Heart right ventricle (tissue), 16 donors: ENCODE measurements at regions of chr3 and their contacts with region 1.

Region 1: DNA sequence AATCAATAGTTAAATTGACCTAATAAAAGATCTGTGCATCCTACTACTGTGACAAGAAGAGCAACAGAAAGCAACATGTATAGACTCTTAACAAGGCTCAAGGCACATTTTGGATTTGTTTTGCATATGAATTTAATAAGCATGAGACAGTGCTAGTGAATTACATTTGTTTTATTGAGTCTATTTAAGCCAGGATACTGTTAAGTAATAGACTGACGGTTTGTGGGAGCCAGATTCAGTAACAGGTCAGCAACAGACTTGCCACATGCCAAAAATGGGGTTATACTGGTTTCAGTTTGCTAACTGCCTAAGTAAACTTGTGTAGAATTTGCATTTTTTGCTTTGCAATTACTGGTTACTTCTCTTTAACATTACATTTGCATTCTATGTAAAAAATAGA is 54.0 kb downstream of the MBNL1 start:
- DNase-seq: no peak
- ATAC-seq: peak in 4 of 8 donors; percentile 28 to 53 (median 42)
- H3K4me3 ChIP-seq: no peak overlapping the region
- H3K27ac ChIP-seq: peak overlapping the region in 8 of 10 donors; percentile 6 to 67 (median 54)
- H3K4me1 ChIP-seq: peaks cover 3 to 91% (median 74%) of the 10 kb centered on the region in 9 donors
- H3K27me3 ChIP-seq: no peaks in the 10 kb centered on the region
- CTCF ChIP-seq: no peak

Region 2: DNA sequence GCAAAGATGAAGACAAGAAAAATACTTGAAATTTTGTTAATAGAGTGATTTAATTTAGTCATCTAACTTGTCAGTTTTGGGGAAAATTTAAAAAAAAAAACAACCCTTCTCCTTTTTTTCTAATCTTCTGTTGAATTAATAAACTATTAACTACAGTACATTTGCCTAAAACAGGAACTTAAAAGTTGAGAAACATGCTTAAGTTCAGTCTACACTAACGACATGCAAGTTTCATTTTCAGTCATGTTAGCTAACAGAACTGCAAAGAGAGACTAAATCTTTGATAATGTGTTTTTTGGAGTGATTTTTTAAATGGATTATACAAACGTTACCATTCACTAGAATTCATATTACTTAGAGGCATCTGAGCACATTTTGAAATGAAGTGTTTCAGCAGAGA is 126.0 kb before region 1 on chr3:
- intact Hi-C with region 1: no loop called
- DNase-seq: no peak
- ATAC-seq: no peak
- H3K4me3 ChIP-seq: peak overlapping the region in 6 of 10 donors; percentile 1 to 20 (median 11)
- H3K27ac ChIP-seq: peak overlapping the region in 6 of 10 donors; percentile 12 to 91 (median 46)
- H3K4me1 ChIP-seq: peaks cover 0 to 87% (median 21%) of the 10 kb centered on the region in 9 donors
- H3K27me3 ChIP-seq: no peaks in the 10 kb centered on the region
- CTCF ChIP-seq: no peak

Region 3: DNA sequence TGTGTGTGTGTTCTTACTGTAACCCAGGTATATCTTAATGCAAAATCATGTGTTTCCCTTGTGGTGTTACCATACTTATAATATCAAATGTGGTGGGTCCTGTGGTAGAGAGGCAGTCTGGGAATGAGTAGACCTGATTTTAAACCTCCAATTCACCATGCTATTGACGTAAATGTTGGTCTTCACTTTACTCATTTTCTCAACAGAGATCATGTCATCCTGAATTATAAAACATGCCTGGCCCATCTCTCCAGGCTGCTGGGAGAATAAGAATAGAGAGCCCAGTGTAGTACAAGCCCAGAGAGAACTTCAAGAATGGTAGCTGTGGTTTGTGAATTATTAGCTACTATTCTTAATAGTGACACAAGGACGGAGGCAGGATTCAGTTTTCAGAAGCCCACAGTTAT is 34.1 kb after region 1 on chr3:
- intact Hi-C with region 1: no loop called
- DNase-seq: no peak
- ATAC-seq: peak in 2 of 8 donors; percentile 30 to 54
- H3K4me3 ChIP-seq: no peak overlapping the region
- H3K27ac ChIP-seq: peak overlapping the region in 1 of 10 donors; percentile 17
- H3K4me1 ChIP-seq: peaks cover 0 to 93% (median 67%) of the 10 kb centered on the region in 9 donors
- H3K27me3 ChIP-seq: no peaks in the 10 kb centered on the region
- CTCF ChIP-seq: no peak

Region 4: DNA sequence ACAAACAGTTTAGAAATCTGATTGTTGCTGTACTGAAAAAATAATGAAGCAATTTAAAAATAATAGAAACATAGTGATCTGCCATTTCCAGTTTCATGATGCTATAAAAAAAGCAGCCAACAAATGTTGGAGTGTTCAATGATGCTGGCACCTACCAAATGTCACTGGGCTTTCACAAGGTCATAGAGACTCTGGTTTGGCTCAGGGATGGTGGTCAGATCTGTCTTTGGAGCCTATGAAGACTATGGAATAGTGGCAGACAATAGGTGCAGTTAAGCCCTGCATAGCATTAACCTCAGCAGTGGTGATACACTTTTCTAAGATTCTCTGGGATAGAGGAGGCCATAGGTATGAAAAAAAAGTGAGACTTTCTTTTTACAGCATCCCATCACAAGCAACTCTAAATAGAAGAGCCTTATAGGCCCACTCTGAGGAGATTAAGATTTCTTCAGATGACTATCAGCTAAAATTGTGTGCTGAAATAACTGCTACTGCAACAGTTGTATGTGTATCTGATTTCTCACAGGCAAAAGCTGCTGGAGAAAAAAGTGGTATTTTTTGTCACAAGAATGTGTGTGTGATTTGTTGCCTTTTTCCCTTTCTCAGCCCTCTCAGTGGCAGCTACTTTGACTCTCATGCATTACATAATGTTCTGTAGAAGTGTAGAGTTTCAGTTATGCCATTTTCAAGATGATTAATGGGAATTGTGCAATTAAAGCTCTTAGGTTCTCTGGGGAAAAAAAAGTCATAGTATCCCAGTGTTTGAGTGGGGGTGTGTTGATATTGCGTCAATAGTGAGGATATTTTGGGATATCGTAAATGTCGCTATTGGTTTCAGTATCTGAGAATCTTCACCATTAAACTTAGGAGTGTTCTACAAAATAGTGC is 83.4 kb after region 1 on chr3:
- intact Hi-C with region 1: loop called in 1 of 10 experiments (anchors 5 kb)
- DNase-seq: no peak
- ATAC-seq: peak; percentile 24 to 74 (median 56)
- H3K4me3 ChIP-seq: peak overlapping the region in 3 of 10 donors; percentile 15 to 17 (median 15)
- H3K27ac ChIP-seq: peak overlapping the region; percentile 36 to 85 (median 77)
- H3K4me1 ChIP-seq: peaks cover 0 to 82% (median 69%) of the 10 kb centered on the region in 9 donors
- H3K27me3 ChIP-seq: no peaks in the 10 kb centered on the region
- CTCF ChIP-seq: no peak

Region 5: DNA sequence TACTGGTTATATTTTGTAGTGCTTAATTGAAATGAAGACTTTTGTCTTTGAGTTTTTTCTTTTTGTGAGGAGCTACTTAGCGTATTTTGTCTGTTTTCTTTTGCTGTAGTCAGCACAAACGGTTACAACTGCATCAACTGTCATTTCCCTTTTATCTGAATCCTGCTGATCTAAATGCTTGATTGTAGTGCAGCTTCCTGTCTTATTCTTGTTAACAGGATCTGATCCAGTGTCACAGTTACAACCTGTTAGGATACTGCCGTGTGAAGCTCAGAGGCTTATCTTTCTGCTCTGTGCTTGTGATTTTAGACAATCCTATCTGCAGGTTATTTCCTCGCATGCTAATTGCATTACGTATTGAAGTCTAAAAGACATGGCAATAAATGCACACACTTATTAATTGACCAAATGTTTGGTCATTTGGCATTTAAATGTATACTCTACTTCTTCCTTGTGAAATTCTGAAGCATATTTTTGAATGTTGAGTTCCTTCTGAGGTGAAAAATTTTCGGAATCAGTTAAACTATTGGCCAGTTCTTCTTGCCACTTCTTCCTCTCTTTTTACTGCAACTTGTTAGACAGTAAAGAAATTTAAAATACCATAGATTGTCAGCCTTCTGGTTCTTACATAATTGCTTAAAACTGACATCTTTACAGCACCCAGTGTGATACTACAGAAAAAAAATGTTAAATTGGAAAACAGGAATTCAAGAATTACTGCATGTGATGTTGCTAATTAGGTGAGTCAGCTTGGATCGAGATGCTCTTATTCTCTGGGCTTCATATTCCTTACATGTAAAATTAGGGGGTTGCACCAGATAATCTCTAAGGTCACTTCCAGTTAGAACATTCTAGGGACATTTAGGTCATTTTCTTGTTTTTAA is 114.2 kb after region 1 on chr3:
- intact Hi-C with region 1: loop called in 1 of 10 experiments (anchors 10 kb)
- DNase-seq: no peak
- ATAC-seq: peak; percentile 41 to 76 (median 62)
- H3K4me3 ChIP-seq: no peak overlapping the region
- H3K27ac ChIP-seq: peak overlapping the region in 8 of 10 donors; percentile 9 to 54 (median 35)
- H3K4me1 ChIP-seq: peaks cover 0 to 53% (median 45%) of the 10 kb centered on the region in 9 donors
- H3K27me3 ChIP-seq: no peaks in the 10 kb centered on the region
- CTCF ChIP-seq: no peak